Activated CD8-positive, alpha-beta T cell treated with anti-CD3 and anti-CD28 coated beads, Interleukin-2, amount 10 ng/mL, durations not matched to agents 7 days and 5 days (primary cell): ENCODE measurements at regions of chr5 and their contacts with region 1.

Region 1: GRCh38 chr5:177454397-177455035 is 7.9 kb downstream of the PRR7 start:
- DNase-seq: peak; percentile 94
- ATAC-seq: peak; percentile 50
- H3K4me3 Mint-ChIP-seq: peak overlapping the region; percentile 78
- H3K27ac Mint-ChIP-seq: peak overlapping the region; percentile 75
- H3K4me1 Mint-ChIP-seq: peaks cover 30% of the 10 kb centered on the region
- H3K27me3 Mint-ChIP-seq: peaks cover 3% of the 10 kb centered on the region

Region 2: DNA sequence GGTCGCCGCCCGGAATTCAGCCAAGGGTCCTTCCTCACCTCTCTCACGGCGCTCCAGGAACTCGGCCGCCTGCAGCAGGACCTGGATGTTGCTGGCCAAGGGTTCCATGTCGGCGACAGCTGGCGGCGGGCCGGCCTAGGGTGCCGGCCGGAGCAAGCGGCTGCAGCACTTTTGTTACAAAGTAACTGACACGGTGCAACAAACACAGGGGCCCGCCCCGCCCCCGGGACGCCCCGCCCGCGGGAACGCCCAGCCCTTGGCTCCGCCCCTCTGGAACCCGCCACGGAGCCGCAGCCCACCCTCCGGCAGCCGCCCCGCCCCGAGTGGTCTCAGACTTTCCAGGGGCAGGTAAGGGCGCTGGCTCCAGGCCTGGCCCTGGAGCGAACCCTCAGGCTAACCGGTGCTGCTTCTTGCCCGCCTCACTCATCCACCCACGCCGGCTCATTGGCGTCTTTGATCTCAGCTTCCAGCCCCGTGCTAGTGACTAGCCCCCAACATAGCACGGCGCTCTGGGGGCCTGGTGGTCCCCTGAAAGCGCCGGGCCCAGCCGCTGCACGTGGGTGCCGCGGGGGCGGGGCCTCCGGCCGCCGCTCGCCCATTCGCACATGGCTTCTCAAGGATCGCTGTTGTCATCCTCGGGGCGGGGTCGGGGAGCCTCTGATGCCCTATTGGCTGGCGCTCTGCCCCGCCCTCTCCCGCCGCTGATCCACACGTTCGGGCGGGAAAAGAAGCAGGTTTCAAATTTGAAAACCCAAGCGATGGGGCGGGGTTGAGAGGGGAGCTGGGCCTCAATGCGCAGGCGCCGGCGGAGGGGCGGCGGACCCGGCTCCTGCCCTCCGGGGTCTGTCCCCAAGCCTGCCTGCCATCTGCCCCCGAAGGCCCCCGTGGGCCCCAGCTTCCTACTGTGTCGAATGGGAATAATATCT is 142.5 kb before region 1 on chr5 and contains the start of gene MXD3:
- CTCF ChIA-PET with region 1: interaction called, 21 read pairs
- POLR2A ChIA-PET with region 1: interaction called, 7 read pairs
- DNase-seq: peak; percentile 99
- ATAC-seq: peak; percentile 87
- H3K4me3 Mint-ChIP-seq: peak within 1 kb of the TSS; percentile 95
- H3K27ac Mint-ChIP-seq: peak within 1 kb of the TSS; percentile 93
- H3K4me1 Mint-ChIP-seq: peaks cover 55% of the 10 kb centered on the region
- H3K27me3 Mint-ChIP-seq: no peaks in the 10 kb centered on the region
- total RNA-seq, gene MXD3: 93.2 to 96.9 TPM

Region 3: DNA sequence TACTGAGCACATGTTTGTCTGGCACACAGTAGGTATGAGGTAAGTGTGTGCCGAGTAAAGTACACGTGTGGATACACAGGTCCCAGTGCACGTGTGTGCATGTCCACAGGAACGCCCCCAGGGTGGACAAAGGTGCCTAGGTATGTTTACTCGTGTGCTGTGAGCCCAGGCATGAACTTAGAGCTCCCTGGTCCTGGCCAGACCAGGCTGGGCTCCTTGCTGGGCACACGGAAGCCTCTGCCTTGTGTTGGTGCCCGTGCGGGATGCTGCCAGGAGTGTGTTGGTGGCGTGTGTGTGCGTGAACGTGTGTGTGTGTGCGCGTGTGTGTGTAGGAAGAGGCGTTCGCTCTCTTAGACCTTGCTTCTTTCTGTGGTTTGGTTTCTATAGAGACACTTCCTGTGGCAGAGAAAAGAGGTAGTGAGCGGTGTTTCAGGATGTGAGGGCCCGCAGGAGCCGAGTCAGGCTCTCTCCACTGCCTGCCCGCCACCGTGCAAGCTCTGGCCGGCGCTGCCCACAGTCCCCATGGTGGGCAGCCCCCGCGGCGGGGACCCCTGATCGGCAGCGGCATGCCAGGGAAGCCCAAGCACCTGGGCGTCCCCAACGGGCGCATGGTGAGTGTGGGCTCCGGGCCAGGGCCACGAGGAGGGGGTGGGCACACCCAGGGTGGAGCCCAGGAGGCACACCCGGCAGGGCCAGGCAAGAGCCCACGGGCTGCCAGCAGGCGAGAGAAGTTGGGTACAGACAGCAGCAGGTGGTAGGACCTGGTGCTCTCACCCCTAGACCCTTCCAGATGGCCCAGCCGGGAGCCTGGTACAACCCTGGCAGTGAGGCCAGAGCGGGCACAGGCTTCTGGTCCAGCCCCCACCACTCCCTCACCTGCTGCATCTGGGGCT is 96.8 kb before region 1 on chr5 and contains the start of gene RGS14:
- CTCF ChIA-PET with region 1: interaction called, 18 read pairs
- POLR2A ChIA-PET with region 1: interaction called, 4 read pairs
- DNase-seq: peak; percentile 82
- ATAC-seq: peak; percentile 91
- H3K4me3 Mint-ChIP-seq: peak within 1 kb of the TSS; percentile 90
- H3K27ac Mint-ChIP-seq: peak within 1 kb of the TSS; percentile 94
- H3K4me1 Mint-ChIP-seq: peaks cover 80% of the 10 kb centered on the region
- H3K27me3 Mint-ChIP-seq: no peaks in the 10 kb centered on the region
- total RNA-seq, gene RGS14: 112 to 117 TPM

Region 4: DNA sequence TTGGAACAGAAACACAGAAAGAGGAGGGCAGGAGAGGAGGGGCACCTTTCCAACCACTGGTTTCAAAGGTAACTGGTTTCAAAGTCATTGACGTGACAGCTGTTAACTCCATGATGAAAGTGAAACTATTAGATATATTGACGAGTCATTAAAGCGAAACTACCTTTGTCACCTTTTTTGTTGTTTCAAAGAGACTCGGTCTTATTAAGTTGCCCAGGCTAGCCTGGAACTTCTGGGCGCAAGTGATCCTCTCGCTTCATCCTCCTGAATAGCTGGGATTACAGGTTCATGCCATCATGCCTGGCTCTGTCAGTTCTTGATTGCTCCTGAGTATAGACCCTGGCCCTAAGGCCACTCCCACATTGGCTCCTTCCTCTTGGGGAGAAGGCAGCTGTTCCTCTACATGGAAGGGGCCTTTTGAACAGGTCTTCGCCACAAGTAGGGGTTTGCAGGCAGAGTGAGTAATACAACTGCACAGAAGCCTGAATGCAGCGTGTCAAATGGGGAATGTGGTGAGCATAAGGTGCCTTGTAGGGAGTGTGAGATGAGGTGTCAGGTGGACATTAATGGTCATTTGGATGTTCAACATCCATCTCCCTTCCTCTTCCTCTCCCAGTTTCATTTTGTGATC is 41.8 kb before region 1 on chr5:
- CTCF ChIA-PET with region 1: interaction called, 19 read pairs
- POLR2A ChIA-PET with region 1: no interaction called
- DNase-seq: no peak
- ATAC-seq: peak; percentile 38
- H3K4me3 Mint-ChIP-seq: peak overlapping the region; percentile 10
- H3K27ac Mint-ChIP-seq: peak overlapping the region; percentile 65
- H3K4me1 Mint-ChIP-seq: peaks cover 46% of the 10 kb centered on the region
- H3K27me3 Mint-ChIP-seq: no peaks in the 10 kb centered on the region

Region 5: DNA sequence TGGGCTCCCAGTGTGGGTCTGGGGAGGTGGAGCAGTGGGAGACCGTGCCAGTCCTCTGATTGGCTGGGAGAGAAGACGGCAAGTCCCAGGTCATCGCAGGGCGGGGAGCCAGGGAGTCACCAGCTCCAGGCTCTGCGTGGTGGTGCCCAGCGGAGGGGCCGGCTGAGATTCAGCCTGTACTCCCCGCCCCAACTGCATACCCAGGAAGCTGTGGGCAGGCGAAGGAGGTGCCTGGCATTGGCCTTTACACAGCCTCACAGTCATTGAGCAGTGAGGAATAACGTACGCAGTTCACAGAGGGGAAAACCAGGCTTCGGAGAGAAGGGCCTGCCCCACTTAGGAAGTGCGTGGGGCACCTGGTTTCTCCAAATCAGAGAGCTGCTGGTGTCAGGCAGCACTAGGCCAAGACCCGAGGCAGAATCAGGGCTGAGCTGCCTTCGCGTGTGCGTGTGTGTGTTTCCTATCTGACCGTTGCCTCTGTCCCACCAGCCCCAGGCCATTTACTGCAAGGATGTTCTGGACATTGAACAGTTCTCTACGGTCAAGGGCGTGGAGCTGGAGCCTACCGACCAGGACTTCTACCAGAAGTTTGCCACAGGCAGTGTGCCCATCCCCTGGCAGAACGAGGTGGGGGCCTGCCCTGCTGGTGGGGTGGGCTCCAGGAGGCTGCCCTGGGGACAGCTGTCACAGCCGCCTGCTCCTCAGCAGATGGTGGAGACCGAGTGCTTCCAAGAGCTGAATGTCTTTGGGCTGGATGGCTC is 14.1 kb before region 1 on chr5:
- CTCF ChIA-PET with region 1: interaction called, 53 read pairs
- POLR2A ChIA-PET with region 1: interaction called, 11 read pairs
- DNase-seq: no peak
- ATAC-seq: no peak
- H3K4me3 Mint-ChIP-seq: no peak overlapping the region
- H3K27ac Mint-ChIP-seq: peak overlapping the region; percentile 40
- H3K4me1 Mint-ChIP-seq: peaks cover 59% of the 10 kb centered on the region
- H3K27me3 Mint-ChIP-seq: no peaks in the 10 kb centered on the region

Region 6: DNA sequence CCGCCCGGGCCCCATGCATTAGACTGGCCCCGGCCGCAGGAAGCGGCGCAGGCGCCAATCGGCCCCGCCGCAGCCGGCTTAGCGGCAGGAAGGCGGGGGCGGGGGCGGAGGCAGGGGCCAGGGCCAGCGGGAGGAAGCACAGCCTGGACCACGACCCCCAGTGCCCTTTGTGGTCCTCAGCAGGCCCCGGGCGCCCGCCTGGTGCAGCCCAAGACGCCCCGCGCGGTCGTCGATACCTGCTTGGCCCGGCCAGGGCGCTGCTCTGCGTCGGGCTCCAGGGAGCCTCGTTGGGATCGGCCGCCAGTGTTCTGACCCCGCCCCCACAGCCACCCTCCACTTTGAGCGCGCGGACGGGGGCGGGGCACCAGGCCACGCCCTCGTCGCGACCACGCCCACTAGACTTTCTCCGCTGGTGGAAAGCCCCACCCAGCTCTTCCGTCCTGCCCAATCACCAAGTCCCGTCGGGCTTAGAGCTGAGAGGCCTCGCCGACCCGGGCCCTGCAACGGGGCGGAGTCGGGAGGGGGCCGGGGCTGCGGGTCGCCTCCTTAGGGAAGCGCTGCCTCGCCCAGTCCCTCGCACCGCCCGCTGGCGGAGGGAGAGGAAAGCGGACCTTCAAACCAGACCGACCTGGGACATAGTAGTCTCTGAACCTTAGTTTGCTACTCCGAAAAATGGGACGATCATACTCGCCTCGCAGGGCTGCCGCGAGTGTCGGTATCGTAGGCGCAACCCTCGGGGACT is 42.9 kb after region 1 on chr5 and contains the start of gene PDLIM7:
- CTCF ChIA-PET with region 1: interaction called, 76 read pairs
- POLR2A ChIA-PET with region 1: no interaction called
- DNase-seq: peak; percentile 97
- ATAC-seq: peak; percentile 91
- H3K4me3 Mint-ChIP-seq: peak within 1 kb of the TSS; percentile 82
- H3K27ac Mint-ChIP-seq: peak within 1 kb of the TSS; percentile 67
- H3K4me1 Mint-ChIP-seq: peaks cover 61% of the 10 kb centered on the region
- H3K27me3 Mint-ChIP-seq: peaks cover 18% of the 10 kb centered on the region
- total RNA-seq, gene PDLIM7: 62.5 to 67.3 TPM